ENCODE measurements at regions of chr20 and their contacts with region 1.

Region 1: DNA sequence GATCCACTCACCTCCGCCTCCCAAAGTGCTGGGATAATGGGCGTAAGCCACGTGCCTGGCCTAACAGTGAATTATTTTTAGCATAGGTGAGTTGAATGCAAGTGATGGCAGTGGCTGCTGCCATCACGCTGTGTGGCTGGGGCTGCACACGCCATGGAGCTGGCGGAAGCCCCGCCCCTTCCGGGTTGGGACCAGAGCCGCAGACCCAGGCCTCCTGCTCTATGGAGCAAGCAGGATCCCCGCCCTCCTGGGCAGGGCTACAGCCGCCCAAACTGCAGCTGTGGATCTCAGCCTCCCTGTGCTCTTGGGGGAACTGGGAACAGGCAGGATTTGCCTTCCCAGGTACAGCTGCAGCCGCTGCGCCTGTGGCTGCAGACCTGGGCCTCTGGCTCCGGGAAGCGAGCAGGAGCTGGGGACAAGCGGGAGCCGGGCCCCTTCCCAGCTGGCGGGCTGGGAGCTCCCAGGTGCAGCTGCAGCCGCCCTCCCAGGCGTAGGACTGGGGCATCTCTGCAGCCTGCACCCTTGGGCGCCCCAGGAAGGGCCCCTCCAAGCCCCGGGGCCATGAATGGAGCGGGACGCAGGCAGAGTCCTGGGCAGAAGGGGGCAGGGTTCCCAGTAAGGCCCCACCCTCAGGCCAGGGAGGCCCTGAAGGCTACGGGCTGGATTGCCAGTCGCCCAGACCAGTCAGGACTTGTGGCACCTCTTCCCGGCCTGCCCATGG is 30.9 kb upstream of the SLA2 start:
- DNase-seq: peak; percentile 89 to 94
- H3K4me3 ChIP-seq: peak overlapping the region; percentile 50 to 72 (median 61)
- H3K27ac ChIP-seq: peak overlapping the region; percentile 63; the same call in 1 of the 2 replicates
- H3K4me1 ChIP-seq: peaks cover 0 to 5% (median 2%) of the 10 kb centered on the region in 4 experiments; a peak in 4 of 7 replicates
- H3K27me3 ChIP-seq: no peaks in the 10 kb centered on the region
- CTCF ChIP-seq: no peak
- EP300 ChIP-seq: no peak
- POLR2A ChIP-seq: peak in 1 of 2 experiments; percentile 14; a peak in 2 of 3 replicates
- RAD21 ChIP-seq: 0 out of 4 replicates have a peak, but pooled peaks of 1 of the 2 experiments have one; percentile 10

Region 2: GRCh38 chr20:36658300-36658699 is 18.6 kb before region 1 on chr20:
- CTCF ChIA-PET with region 1: interaction called, 5 read pairs
- POLR2A ChIA-PET with region 1: interaction called, 11 read pairs
- DNase-seq: no peak
- H3K4me3 ChIP-seq: no peak overlapping the region
- H3K27ac ChIP-seq: no peak overlapping the region
- H3K4me1 ChIP-seq: no peaks in the 10 kb centered on the region
- H3K27me3 ChIP-seq: no peaks in the 10 kb centered on the region
- CTCF ChIP-seq: no peak
- EP300 ChIP-seq: no peak
- POLR2A ChIP-seq: no peak
- RAD21 ChIP-seq: no peak

Region 3: GRCh38 chr20:36666181-36666740 is 10.6 kb before region 1 on chr20:
- CTCF ChIA-PET with region 1: interaction called, 6 read pairs
- POLR2A ChIA-PET with region 1: interaction called, 31 read pairs
- DNase-seq: no peak
- H3K4me3 ChIP-seq: no peak overlapping the region
- H3K27ac ChIP-seq: no peak overlapping the region
- H3K4me1 ChIP-seq: no peaks in the 10 kb centered on the region
- H3K27me3 ChIP-seq: no peaks in the 10 kb centered on the region
- CTCF ChIP-seq: peak in 1 of 3 experiments; percentile 5; a peak in 1 of 4 replicates
- EP300 ChIP-seq: no peak
- POLR2A ChIP-seq: no peak
- RAD21 ChIP-seq: peak; percentile 37 to 41

Region 4: GRCh38 chr20:36688630-36689029 is 11.8 kb after region 1 on chr20:
- CTCF ChIA-PET with region 1: interaction called, 12 read pairs
- POLR2A ChIA-PET with region 1: interaction called, 33 read pairs
- DNase-seq: no peak
- H3K4me3 ChIP-seq: no peak overlapping the region
- H3K27ac ChIP-seq: no peak overlapping the region
- H3K4me1 ChIP-seq: no peaks in the 10 kb centered on the region
- H3K27me3 ChIP-seq: no peaks in the 10 kb centered on the region
- CTCF ChIP-seq: no peak
- EP300 ChIP-seq: no peak
- POLR2A ChIP-seq: no peak
- RAD21 ChIP-seq: no peak

Region 5: GRCh38 chr20:36700438-36700837 is 23.6 kb after region 1 on chr20:
- CTCF ChIA-PET with region 1: no interaction called
- POLR2A ChIA-PET with region 1: interaction called, 13 read pairs
- DNase-seq: no peak
- H3K4me3 ChIP-seq: no peak overlapping the region
- H3K27ac ChIP-seq: no peak overlapping the region
- H3K4me1 ChIP-seq: peaks cover 0 to 12% (median 2%) of the 10 kb centered on the region in 4 experiments; a peak in 2 of 7 replicates
- H3K27me3 ChIP-seq: no peaks in the 10 kb centered on the region
- CTCF ChIP-seq: no peak
- EP300 ChIP-seq: no peak
- POLR2A ChIP-seq: no peak
- RAD21 ChIP-seq: no peak

Region 6: DNA sequence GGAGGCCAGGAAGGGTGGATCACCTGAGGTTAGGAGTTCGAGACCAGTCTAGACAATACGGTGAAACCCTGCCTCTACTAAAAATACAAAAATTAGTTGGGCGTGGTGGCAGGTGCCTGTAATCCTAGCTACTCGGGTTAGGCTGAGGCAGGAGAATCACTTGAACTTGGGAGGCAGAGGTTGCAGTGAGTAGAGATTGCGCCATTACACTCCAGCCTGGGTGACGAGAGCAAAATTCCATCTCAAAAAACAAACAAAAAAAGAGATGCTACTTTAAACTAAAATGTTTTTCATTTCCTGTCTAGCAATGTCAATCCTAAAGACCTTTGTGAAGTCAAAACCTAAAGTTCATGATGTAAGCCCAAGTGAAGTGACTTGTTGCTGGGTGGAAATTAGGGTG is 83.8 kb after region 1 on chr20:
- CTCF ChIA-PET with region 1: no interaction called
- POLR2A ChIA-PET with region 1: no interaction called
- DNase-seq: no peak
- H3K4me3 ChIP-seq: no peak overlapping the region
- H3K27ac ChIP-seq: no peak overlapping the region
- H3K4me1 ChIP-seq: no peaks in the 10 kb centered on the region
- H3K27me3 ChIP-seq: no peaks in the 10 kb centered on the region
- CTCF ChIP-seq: no peak
- EP300 ChIP-seq: no peak
- POLR2A ChIP-seq: no peak
- RAD21 ChIP-seq: no peak

Region 7: GRCh38 chr20:36773597-36774390 is 96.9 kb after region 1 on chr20 and contains the start of gene DSN1:
- CTCF ChIA-PET with region 1: no interaction called
- POLR2A ChIA-PET with region 1: interaction called, 15 read pairs
- DNase-seq: peak; percentile 97 to 100
- H3K4me3 ChIP-seq: peak within 1 kb of the TSS; percentile 64 to 93 (median 85)
- H3K27ac ChIP-seq: peak within 1 kb of the TSS; percentile 89
- H3K4me1 ChIP-seq: peaks cover 0 to 7% (median 1%) of the 10 kb centered on the region in 4 experiments; a peak in 3 of 7 replicates
- H3K27me3 ChIP-seq: no peaks in the 10 kb centered on the region
- CTCF ChIP-seq: peak in 1 of 3 experiments; percentile 88; a peak in 1 of 4 replicates
- EP300 ChIP-seq: no peak
- POLR2A ChIP-seq: peak; percentile 59 to 87
- RAD21 ChIP-seq: no peak; a peak in 2 of 4 replicates
- total RNA-seq, gene DSN1: 24.8 and 26.2 TPM in 2 replicates

Measured in H1 (cell line).